HEK293T (cell line): ENCODE measurements at regions of chr12 and their contacts with region 1.

Region 1: GRCh38 chr12:51025836-51026638 is at the start of gene SLC11A2:
- DNase-seq: peak; percentile 94

Region 2: DNA sequence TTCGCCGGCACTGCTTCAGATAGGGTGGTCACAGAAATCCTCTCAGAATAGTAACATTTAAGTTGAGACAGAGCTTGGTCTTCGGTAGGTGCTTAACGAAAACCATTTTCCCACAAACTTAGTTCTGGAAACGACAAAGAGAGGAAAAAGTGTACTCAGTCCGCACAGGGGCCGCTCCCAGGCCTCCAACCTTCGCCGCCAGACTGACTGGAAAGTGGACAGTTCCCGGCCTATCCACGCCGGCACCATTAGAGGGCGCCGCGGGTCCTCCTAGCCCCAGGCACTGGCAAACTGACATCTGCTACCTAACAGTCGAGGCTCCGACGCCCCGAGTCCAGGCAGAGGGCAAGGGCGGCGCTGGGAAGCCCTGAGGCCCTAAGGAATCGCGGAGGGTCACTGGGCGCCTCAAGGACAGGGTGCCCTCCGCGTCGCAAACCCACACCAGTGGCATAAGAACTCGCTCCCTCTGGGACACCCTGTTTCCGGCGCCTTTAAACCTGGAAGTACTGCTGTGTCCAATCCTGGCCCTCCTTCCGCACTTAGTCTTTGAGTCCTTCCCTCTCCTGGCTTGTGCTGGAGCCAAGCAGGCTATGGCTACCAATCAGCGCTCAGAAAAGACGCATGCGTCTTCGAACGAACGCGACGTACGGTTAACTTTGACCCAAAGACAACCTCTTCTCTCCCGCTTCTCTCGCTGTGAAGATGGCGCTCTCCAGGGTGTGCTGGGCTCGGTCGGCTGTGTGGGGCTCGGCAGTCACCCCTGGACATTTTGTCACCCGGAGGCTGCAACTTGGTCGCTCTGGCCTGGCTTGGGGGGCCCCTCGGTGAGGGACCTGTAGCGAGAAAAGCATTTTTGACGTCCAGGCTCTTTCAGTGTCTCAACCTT is 21.9 kb after region 1 on chr12 and contains the start of gene LETMD1:
- CTCF ChIA-PET with region 1: no interaction called
- POLR2A ChIA-PET with region 1: interaction called, 13 read pairs
- DNase-seq: peak; percentile 92

Region 3: DNA sequence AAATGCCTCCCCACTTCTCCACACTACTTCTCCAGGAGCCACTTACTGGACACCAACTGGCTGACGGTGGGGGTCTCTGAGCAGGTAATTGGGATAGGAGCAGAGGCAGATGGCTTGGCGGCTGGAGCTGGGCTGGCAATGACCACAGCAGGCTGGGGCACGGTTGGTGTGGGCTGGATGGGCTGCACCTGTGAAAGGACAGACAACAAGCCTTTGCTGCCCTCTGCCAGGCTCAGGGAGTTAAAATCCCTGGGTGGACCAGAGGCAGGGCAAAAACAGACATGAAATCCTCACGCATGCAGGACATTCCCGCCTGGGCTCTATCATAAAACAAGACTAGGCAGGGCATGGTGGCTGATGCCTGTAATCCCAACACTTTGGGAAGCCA is 166.2 kb after region 1 on chr12:
- CTCF ChIA-PET with region 1: no interaction called
- POLR2A ChIA-PET with region 1: no interaction called
- DNase-seq: no peak